ENCODE measurements at regions of chr5 and their contacts with region 1.

Region 1: DNA sequence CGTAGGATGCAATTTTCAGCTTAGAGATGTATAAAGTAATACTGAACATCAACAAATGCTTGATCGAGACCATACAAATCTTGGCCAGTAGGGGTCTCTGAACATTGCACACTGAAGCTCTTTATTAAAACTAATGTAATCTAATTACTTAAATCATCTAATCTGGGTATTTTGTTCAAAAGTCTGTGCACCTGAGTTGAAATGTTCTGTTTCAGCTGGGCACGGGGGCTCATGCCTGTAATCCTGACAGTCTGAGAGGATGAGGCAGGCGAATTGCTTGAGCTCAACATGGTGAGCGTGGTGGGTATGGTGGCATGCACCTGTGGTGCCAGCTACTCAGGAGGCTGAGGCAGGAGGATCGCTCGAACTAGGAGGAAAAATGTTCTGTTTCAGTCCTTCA is 41.0 kb downstream of the ESM1 start:
- DNase-seq: no peak
- H3K4me3 ChIP-seq: no peak overlapping the region
- H3K27ac ChIP-seq: no peak overlapping the region
- H3K4me1 ChIP-seq: no peaks in the 10 kb centered on the region
- H3K27me3 ChIP-seq: no peaks in the 10 kb centered on the region
- CTCF ChIP-seq: peak; percentile 40

Region 2: GRCh38 chr5:54703133-54703532 is 241.2 kb before region 1 on chr5:
- intact Hi-C with region 1: no loop called
- DNase-seq: peak; percentile 43
- H3K4me3 ChIP-seq: no peak overlapping the region
- H3K27ac ChIP-seq: no peak overlapping the region
- H3K4me1 ChIP-seq: no peaks in the 10 kb centered on the region
- H3K27me3 ChIP-seq: no peaks in the 10 kb centered on the region
- CTCF ChIP-seq: no peak

Region 3: GRCh38 chr5:55146543-55147151 is 202.3 kb after region 1 on chr5:
- intact Hi-C with region 1: loop called (anchors 10 kb)
- DNase-seq: peak; percentile 82
- H3K4me3 ChIP-seq: no peak overlapping the region
- H3K27ac ChIP-seq: no peak overlapping the region
- H3K4me1 ChIP-seq: no peaks in the 10 kb centered on the region
- H3K27me3 ChIP-seq: no peaks in the 10 kb centered on the region
- CTCF ChIP-seq: peak; percentile 90